ENCODE measurements at regions of chr1 and their contacts with region 1.

Region 1: GRCh38 chr1:202009326-202010179 is 834 bp upstream of the ELF3 start:
- DNase-seq: peak; percentile 68
- H3K4me3 Mint-ChIP-seq: no peak overlapping the region
- H3K27ac Mint-ChIP-seq: no peak overlapping the region
- H3K4me1 Mint-ChIP-seq: no peaks in the 10 kb centered on the region
- H3K27me3 Mint-ChIP-seq: no peaks in the 10 kb centered on the region

Region 2: GRCh38 chr1:201766131-201766866 is 243.3 kb before region 1 on chr1:
- CTCF ChIA-PET with region 1: no interaction called
- POLR2A ChIA-PET with region 1: no interaction called
- intact Hi-C with region 1: no loop called
- DNase-seq: no peak
- H3K4me3 Mint-ChIP-seq: no peak overlapping the region
- H3K27ac Mint-ChIP-seq: no peak overlapping the region
- H3K4me1 Mint-ChIP-seq: no peaks in the 10 kb centered on the region
- H3K27me3 Mint-ChIP-seq: no peaks in the 10 kb centered on the region

Region 3: DNA sequence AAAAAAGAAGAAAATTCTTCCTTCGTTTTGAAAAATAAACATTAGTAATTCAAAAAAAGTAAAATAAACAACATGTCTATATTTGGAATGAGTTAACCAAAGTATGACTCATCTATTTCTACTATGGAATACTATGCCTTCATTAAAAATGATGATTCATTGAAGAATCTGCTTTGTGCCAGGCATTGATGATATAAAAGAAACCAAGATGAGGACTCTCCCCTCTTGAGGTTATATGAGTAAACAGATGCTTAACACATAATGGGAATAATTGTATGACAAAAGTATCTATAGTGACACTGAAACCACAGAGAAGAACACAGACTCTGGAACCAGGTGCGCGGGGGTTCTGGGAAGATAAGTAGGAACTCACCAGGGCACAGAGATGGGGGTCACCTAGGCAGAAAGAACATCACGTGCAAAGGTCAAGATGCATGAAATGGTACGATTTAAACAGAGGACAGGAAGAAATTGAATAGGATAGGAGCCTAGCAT is 19.7 kb after region 1 on chr1:
- CTCF ChIA-PET with region 1: no interaction called
- POLR2A ChIA-PET with region 1: no interaction called
- intact Hi-C with region 1: no loop called
- DNase-seq: peak; percentile 17
- H3K4me3 Mint-ChIP-seq: no peak overlapping the region
- H3K27ac Mint-ChIP-seq: no peak overlapping the region
- H3K4me1 Mint-ChIP-seq: peaks cover 2% of the 10 kb centered on the region
- H3K27me3 Mint-ChIP-seq: peaks cover 1% of the 10 kb centered on the region

Region 4: GRCh38 chr1:202117865-202118371 is 108.4 kb after region 1 on chr1:
- CTCF ChIA-PET with region 1: interaction called, 7 read pairs
- POLR2A ChIA-PET with region 1: no interaction called
- intact Hi-C with region 1: loop called (anchors 2 kb)
- DNase-seq: no peak
- H3K4me3 Mint-ChIP-seq: no peak overlapping the region
- H3K27ac Mint-ChIP-seq: no peak overlapping the region
- H3K4me1 Mint-ChIP-seq: no peaks in the 10 kb centered on the region
- H3K27me3 Mint-ChIP-seq: no peaks in the 10 kb centered on the region

Region 5: DNA sequence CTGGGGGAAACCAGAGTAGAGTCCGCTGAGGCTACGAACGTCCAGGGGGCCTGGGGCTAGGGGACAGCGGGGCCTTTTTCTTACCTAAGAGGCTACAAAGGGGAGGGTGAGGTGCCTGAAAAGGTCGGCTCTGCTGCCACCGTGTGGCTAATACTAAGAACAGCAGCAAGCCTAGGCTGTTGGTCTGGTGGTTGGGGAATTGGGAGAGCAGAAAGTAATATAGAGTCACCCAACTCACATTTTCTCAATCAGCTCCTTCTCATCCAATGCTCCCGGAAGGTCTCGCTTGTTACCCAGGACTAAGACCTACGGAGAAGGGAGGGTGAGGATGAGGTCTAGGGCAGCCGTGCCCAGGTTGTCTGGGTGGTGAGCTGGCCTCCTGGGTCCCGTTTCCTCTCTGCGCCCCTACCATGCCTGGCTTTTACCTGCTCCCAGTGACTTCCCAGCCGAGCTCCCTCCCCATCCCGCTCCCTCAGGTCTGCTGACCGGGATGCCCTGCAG is 125.7 kb after region 1 on chr1:
- CTCF ChIA-PET with region 1: interaction called, 12 read pairs
- POLR2A ChIA-PET with region 1: no interaction called
- intact Hi-C with region 1: loop called (anchors 2 kb)
- DNase-seq: peak; percentile 62
- H3K4me3 Mint-ChIP-seq: no peak overlapping the region
- H3K27ac Mint-ChIP-seq: no peak overlapping the region
- H3K4me1 Mint-ChIP-seq: no peaks in the 10 kb centered on the region
- H3K27me3 Mint-ChIP-seq: no peaks in the 10 kb centered on the region

Region 6: DNA sequence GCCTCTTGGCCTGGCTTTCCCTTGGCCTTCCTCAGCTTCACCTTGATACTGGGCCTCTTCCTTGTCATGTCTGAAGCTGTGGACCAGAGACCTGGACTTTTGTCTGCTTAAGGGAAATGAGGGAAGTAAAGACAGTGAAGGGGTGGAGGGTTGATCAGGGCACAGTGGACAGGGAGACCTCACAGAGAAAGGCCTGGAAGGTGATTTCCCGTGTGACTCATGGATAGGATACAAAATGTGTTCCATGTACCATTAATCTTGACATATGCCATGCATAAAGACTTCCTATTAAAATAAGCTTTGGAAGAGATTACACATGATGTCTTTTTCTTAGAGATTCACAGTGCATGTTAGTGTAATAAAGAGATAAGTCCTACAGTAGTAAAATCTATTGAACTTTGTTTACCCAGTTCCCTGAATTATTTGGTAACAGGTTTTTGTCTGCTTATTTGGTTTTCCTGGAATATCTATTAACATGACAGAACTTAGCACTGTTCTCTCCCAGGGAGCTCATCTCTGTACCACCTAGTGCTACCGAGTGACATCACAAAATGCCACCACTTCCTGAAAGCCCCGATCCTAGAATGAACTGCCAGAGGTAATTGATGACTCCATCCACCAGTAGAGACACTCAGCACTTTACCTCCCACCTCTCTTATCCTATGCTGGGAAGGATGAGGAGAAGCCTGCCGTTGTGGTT is 310.0 kb after region 1 on chr1:
- CTCF ChIA-PET with region 1: no interaction called
- POLR2A ChIA-PET with region 1: no interaction called
- intact Hi-C with region 1: no loop called
- DNase-seq: no peak
- H3K4me3 Mint-ChIP-seq: no peak overlapping the region
- H3K27ac Mint-ChIP-seq: no peak overlapping the region
- H3K4me1 Mint-ChIP-seq: no peaks in the 10 kb centered on the region
- H3K27me3 Mint-ChIP-seq: no peaks in the 10 kb centered on the region

Measured in activated CD4-positive, alpha-beta memory T cell treated with anti-CD3 and anti-CD28 coated beads for 36 hours (primary cell).